CD4-positive, alpha-beta T cell (primary cell): ENCODE measurements at regions of chr17 and their contacts with region 1.

Region 1: DNA sequence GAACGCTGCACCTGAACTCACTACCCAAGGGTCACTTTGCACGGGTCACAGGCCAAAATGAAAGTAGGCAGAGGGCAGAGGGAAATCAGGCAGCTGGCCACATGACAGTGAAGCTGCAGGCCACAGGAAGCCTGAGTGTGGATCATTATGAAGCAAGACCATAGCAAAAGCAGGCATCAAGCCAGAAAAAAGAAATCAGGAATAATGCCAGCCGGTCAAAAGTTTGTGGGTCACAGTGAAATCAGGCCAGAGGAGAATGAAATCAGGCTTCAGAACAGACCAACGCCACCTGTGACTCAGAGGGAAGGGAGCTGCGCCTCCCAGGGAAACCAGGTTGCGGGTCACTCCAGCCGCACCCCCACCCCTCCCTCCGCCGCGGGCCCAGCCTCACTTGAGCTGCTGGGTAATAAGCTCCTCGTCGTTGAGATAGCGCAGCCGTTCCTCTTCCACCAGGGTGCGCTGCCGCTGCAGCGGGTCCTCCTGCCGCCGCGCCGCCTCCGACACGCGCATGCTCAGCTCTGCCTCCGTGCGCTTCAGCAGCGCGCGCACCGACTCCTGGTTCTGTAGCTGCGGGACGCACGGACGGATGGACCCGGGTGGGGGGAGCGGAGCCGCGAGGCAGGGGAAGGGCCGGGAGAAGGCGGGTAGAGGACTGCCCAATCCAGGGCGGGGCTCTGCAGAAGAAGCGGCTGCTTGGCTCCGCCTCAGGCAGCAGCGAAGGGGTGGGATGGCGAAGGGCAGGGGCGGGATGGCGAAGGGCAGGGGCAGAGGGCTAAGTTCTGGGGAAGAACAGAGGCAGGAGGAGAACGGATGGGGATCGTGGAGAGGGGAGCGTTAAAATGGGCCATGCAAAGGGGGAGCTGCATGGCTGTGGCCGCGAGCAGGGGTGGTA is 47.7 kb downstream of the SRCIN1 start:
- DNase-seq: peak; percentile 80 to 95 (median 86)
- ATAC-seq: peak; percentile 71
- H3K4me3 ChIP-seq: peak overlapping the region; percentile 90
- H3K4me3 Mint-ChIP-seq: peak overlapping the region; percentile 96
- H3K27ac ChIP-seq: no peak overlapping the region
- H3K27ac Mint-ChIP-seq: peak overlapping the region; percentile 35
- H3K4me1 ChIP-seq: peaks cover 52% of the 10 kb centered on the region
- H3K4me1 Mint-ChIP-seq: peaks cover 26% of the 10 kb centered on the region
- H3K27me3 ChIP-seq: peaks cover 31 to 33% of the 10 kb centered on the region in 2 experiments
- H3K27me3 Mint-ChIP-seq: peaks cover 39% of the 10 kb centered on the region
- CTCF ChIP-seq: peak; percentile 90

Region 2: DNA sequence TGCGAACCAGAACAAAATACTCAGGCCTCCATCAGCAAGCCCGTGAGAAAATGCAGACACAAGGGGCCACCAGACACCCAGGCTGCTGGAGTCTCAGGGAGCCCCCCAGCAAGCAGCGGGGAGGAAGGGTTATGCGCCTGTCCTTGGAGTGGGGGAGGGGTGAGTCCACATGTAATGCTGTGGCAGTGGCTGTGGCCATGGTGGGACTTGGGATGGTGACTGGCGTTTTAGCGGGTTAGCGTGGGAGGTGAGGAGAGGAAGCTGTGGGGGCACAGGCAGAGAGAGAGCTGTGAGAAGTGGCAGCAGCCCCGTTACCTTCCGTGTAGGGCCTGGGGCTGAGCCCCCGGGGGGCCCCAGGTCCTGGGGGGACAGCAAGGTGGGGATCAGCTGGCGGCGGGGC is 10.6 kb before region 1 on chr17:
- CTCF ChIA-PET with region 1: no interaction called
- POLR2A ChIA-PET with region 1: no interaction called
- intact Hi-C with region 1: no loop called
- DNase-seq: peak in 1 of 14 experiments; percentile 10
- ATAC-seq: no peak
- H3K4me3 ChIP-seq: no peak overlapping the region
- H3K4me3 Mint-ChIP-seq: no peak overlapping the region
- H3K27ac ChIP-seq: no peak overlapping the region
- H3K27ac Mint-ChIP-seq: no peak overlapping the region
- H3K4me1 ChIP-seq: no peaks in the 10 kb centered on the region
- H3K4me1 Mint-ChIP-seq: no peaks in the 10 kb centered on the region
- H3K27me3 ChIP-seq: peaks cover 0 to 7% of the 10 kb centered on the region in 2 experiments
- H3K27me3 Mint-ChIP-seq: peaks cover 24% of the 10 kb centered on the region
- CTCF ChIP-seq: no peak

Region 3: GRCh38 chr17:38572669-38573365 is 14.7 kb after region 1 on chr17:
- CTCF ChIA-PET with region 1: interaction called, 10 read pairs
- POLR2A ChIA-PET with region 1: interaction called, 4 read pairs
- intact Hi-C with region 1: loop called in 1 of 2 experiments (anchors 2 kb)
- DNase-seq: peak in 6 of 14 experiments; percentile 9 to 51 (median 34)
- ATAC-seq: peak; percentile 60
- H3K4me3 ChIP-seq: no peak overlapping the region
- H3K4me3 Mint-ChIP-seq: peak overlapping the region; percentile 65
- H3K27ac ChIP-seq: no peak overlapping the region
- H3K27ac Mint-ChIP-seq: no peak overlapping the region
- H3K4me1 ChIP-seq: peaks cover 14% of the 10 kb centered on the region
- H3K4me1 Mint-ChIP-seq: peaks cover 8% of the 10 kb centered on the region
- H3K27me3 ChIP-seq: peaks cover 87 to 89% of the 10 kb centered on the region in 2 experiments
- H3K27me3 Mint-ChIP-seq: peaks cover 91% of the 10 kb centered on the region
- CTCF ChIP-seq: no peak

Region 4: GRCh38 chr17:38604479-38605218 is 46.6 kb after region 1 on chr17:
- CTCF ChIA-PET with region 1: interaction called, 11 read pairs
- POLR2A ChIA-PET with region 1: interaction called, 4 read pairs
- intact Hi-C with region 1: no loop called
- DNase-seq: peak in 4 of 14 experiments; percentile 8 to 58 (median 35)
- ATAC-seq: peak; percentile 19
- H3K4me3 ChIP-seq: no peak overlapping the region
- H3K4me3 Mint-ChIP-seq: peak overlapping the region; percentile 11
- H3K27ac ChIP-seq: no peak overlapping the region
- H3K27ac Mint-ChIP-seq: no peak overlapping the region
- H3K4me1 ChIP-seq: peaks cover 16% of the 10 kb centered on the region
- H3K4me1 Mint-ChIP-seq: peaks cover 28% of the 10 kb centered on the region
- H3K27me3 ChIP-seq: peaks cover 63 to 81% of the 10 kb centered on the region in 2 experiments
- H3K27me3 Mint-ChIP-seq: peaks cover 84% of the 10 kb centered on the region
- CTCF ChIP-seq: no peak

Region 5: DNA sequence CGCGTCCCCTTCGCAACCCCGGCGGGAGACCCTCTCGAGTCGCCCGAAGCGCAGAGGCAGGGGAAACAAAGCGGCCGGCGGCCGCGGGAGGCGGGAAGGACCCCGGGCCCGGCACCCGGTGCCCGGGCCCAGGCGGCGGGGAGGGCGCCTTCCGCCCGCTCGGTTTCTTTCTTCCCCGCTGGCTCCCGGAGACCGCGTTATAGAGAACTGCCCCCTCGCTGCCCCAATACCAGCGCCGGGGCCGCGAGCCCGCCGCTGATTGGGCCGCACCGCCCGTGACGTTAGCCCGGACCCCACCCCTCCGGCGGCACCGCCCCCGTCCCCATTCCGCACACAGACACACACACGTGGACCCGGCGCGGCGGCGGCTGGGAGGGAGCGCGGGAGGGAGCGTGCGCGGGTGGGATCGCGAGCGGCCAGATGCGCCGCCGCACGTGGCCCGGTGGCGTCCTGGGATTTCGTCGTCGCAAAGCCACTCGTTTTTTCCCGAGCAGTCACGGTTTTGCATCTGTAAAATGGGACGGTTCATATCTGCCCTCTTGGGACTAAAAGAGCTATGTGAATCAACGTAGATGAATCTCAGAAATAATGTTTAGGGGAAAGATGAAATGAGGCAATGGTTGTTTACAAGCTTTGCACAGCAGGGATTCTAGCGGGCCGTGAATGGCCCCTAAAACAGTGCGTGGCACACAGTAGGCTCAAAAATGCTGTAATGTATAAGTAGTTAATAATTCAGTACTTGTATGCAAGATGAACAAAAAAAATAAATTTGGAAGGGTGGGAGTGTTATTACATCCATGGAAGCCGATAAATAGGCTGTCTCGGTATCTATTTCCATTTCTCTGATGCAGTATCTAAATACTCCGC is 116.9 kb after region 1 on chr17 and contains the start of gene EPOP:
- CTCF ChIA-PET with region 1: interaction called, 56 read pairs
- POLR2A ChIA-PET with region 1: interaction called, 3 read pairs
- intact Hi-C with region 1: loop called in 1 of 2 experiments (anchors 2 kb)
- DNase-seq: peak; percentile 47 to 92 (median 80)
- ATAC-seq: peak; percentile 80
- H3K4me3 ChIP-seq: peak within 1 kb of the TSS; percentile 38
- H3K4me3 Mint-ChIP-seq: peak within 1 kb of the TSS; percentile 75
- H3K27ac ChIP-seq: no peak within 1 kb of the TSS
- H3K27ac Mint-ChIP-seq: no peak within 1 kb of the TSS
- H3K4me1 ChIP-seq: peaks cover 37% of the 10 kb centered on the region
- H3K4me1 Mint-ChIP-seq: peaks cover 24% of the 10 kb centered on the region
- H3K27me3 ChIP-seq: peaks cover 26 to 34% of the 10 kb centered on the region in 2 experiments
- H3K27me3 Mint-ChIP-seq: peaks cover 54% of the 10 kb centered on the region
- CTCF ChIP-seq: no peak
- total RNA-seq, gene EPOP: 0.16 to 0.34 TPM

Region 6: DNA sequence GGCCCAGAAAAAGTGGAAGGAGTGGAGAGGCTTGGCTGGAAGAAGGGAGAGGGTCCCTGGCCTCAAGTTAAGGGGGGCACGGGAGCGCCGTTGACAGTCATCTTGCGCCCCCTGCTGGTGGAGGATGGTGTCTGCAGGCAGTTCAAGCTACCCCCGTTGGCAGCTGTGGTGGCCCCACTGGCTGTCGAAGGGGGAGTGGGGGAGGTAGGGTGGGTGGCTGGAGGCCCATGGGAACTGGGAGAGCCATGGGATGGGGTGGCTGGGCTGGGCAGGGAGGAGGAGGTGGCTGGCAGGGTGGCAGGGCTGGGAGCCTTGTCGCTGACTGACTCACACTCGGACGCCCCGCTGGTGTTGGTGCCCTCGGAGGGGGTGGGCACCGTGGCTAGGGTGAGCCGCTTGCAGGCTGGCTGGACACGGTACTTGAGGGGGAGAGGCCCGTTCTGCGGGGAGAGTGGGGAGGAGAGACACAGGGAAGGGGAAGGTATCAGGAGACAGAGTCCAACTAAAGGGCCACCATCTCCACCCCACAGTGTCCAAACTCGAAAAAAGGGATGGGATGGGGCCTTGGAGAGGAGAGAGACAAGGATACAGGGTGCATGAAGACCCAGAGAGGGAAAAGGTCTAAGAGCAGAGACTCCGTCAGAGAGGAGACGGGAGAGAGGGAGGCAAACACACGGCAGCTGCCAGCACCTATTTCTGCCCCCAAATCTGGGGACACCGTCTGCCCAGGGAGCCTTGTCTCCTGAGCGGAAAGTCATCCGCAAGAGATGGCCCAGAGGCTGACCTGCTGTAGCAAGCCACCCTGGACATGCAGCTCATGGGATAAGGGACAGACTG is 177.3 kb after region 1 on chr17:
- CTCF ChIA-PET with region 1: interaction called, 17 read pairs
- POLR2A ChIA-PET with region 1: interaction called, 7 read pairs
- intact Hi-C with region 1: loop called (anchors 1 kb)
- DNase-seq: peak; percentile 63 to 83 (median 72)
- ATAC-seq: peak; percentile 46
- H3K4me3 ChIP-seq: no peak overlapping the region
- H3K4me3 Mint-ChIP-seq: no peak overlapping the region
- H3K27ac ChIP-seq: no peak overlapping the region
- H3K27ac Mint-ChIP-seq: no peak overlapping the region
- H3K4me1 ChIP-seq: peaks cover 45% of the 10 kb centered on the region
- H3K4me1 Mint-ChIP-seq: peaks cover 50% of the 10 kb centered on the region
- H3K27me3 ChIP-seq: no peaks in the 10 kb centered on the region
- H3K27me3 Mint-ChIP-seq: no peaks in the 10 kb centered on the region
- CTCF ChIP-seq: peak; percentile 93

Region 7: GRCh38 chr17:39401412-39402243 is 843.5 kb after region 1 on chr17 and contains the start of gene FBXL20:
- CTCF ChIA-PET with region 1: no interaction called
- POLR2A ChIA-PET with region 1: no interaction called
- intact Hi-C with region 1: no loop called
- DNase-seq: peak; percentile 89 to 96 (median 94)
- ATAC-seq: peak; percentile 77
- H3K4me3 ChIP-seq: peak within 1 kb of the TSS; percentile 97
- H3K4me3 Mint-ChIP-seq: peak within 1 kb of the TSS; percentile 100
- H3K27ac ChIP-seq: peak within 1 kb of the TSS; percentile 68 to 72
- H3K27ac Mint-ChIP-seq: peak within 1 kb of the TSS; percentile 98
- H3K4me1 ChIP-seq: peaks cover 13% of the 10 kb centered on the region
- H3K4me1 Mint-ChIP-seq: peaks cover 40% of the 10 kb centered on the region
- H3K27me3 ChIP-seq: no peaks in the 10 kb centered on the region
- H3K27me3 Mint-ChIP-seq: no peaks in the 10 kb centered on the region
- CTCF ChIP-seq: no peak
- total RNA-seq, gene FBXL20: 16.7 to 17.1 TPM